ENCODE measurements at regions of chr10 and their contacts with region 1.

Region 1: DNA sequence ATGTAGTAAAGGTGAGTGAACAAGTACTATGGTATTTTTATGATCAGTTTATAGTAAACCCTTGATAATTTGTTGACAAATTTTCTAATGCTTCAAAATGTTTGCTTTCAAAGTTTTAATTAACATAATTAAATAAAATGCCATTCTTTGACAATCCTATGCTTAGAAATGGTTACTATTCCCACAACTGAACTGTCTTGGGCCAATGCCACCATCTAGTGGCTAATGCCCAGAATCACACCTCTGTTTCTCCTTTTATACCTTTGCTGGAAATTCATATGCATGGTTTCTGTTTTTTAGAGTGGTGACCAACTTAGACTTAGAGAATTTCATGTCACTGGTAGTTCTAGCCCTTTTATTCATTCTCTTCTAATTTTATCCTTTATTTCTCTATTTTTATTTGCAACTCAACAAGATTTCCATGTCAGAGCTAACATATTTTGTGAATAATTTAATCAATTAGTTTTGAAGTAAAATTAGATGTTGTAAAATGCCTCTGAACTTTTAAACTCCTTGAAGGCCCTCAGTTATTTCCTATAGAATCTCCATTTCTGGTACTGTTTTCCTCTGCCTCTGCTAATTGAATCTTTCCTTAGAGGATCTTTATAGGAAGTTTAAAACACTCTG is 31.1 kb downstream of the PCGF5 start:
- DNase-seq: no peak
- H3K4me3 ChIP-seq: no peak overlapping the region
- H3K27ac ChIP-seq: no peak overlapping the region
- H3K4me1 ChIP-seq: peaks cover 0 to 4% (median 0%) of the 10 kb centered on the region in 4 experiments; a peak in 2 of 7 replicates
- H3K27me3 ChIP-seq: no peaks in the 10 kb centered on the region
- CTCF ChIP-seq: peak in 2 of 3 experiments; percentile 76 to 81; a peak in 3 of 4 replicates
- EP300 ChIP-seq: no peak
- POLR2A ChIP-seq: no peak
- RAD21 ChIP-seq: peak; percentile 95 to 96

Region 2: DNA sequence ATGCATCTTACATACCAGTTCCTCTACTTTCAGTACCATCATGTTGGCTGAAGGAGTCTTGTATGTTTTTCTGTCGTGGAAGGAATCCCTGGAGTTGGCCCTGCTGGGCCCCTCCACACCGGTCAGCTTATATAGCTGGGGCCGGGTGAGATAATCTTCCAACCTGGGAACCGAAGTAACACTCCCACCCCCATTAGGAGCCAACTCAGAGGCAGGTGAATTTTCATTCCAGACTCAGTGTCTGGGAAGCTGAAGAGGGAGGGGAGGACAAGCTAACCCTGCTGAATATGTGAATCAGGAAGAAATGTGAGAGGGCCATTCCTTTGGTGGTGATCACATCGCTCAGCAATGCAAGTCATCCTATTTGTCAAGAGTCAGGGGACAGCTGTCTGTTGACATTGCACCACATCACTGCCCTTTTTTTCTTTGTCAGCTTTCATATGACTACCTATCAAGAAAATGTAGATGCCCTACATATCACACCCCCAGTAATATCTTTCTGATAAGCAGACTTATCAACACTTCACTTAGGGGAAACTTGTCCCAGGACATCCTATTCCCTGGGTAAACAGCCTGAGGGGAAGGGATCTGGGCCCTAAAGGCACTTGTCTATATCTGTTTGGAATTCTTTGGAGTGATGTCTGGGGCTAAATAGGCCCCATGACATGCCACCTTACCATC is 330.4 kb before region 1 on chr10 and contains the start of gene ANKRD1:
- CTCF ChIA-PET with region 1: interaction called, 13 read pairs
- POLR2A ChIA-PET with region 1: interaction called, 4 read pairs
- DNase-seq: peak in 1 of 2 experiments; percentile 67
- H3K4me3 ChIP-seq: no peak within 1 kb of the TSS
- H3K27ac ChIP-seq: no peak within 1 kb of the TSS
- H3K4me1 ChIP-seq: peaks cover 0 to 3% (median 2%) of the 10 kb centered on the region in 4 experiments; a peak in 3 of 7 replicates
- H3K27me3 ChIP-seq: peaks cover 88 to 98% (median 97%) of the 10 kb centered on the region in 4 experiments
- CTCF ChIP-seq: no peak
- EP300 ChIP-seq: no peak
- POLR2A ChIP-seq: no peak
- RAD21 ChIP-seq: no peak
- total RNA-seq, gene ANKRD1: not detected in 2 replicates

Region 3: DNA sequence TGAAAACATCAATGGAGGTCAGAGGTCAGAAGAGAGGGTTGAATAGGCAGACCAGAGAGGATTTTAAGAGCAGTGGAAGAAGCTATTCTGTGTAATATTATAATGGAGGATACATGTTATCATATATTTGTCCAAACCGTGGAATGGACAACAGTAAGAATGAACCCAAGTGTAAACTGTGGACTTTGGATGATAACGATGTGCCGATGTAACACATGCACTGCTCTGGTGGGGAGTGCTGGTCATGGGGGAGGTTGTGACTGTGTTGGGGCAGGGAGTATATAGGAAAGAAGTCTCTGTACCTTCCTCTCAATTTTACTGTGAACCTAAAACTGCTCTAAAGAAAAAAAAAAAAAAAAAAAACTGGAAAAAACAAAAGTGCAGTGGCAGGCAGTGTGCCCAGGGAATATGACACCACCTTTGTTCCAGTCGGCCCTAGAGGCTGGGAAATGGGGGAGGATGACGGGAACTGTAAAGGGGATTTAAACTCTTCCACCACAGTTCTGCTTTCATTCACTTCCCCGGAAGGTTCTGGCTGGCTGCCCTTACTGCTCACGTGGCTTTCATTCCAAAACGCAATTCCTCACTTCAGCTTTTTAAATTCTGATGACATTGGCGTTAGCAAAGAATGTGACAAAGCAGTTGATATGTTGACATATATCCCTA is 216.9 kb before region 1 on chr10:
- CTCF ChIA-PET with region 1: interaction called, 16 read pairs
- POLR2A ChIA-PET with region 1: no interaction called
- DNase-seq: no peak
- H3K4me3 ChIP-seq: no peak overlapping the region
- H3K27ac ChIP-seq: no peak overlapping the region
- H3K4me1 ChIP-seq: peaks cover 0 to 9% (median 4%) of the 10 kb centered on the region in 4 experiments; a peak in 4 of 7 replicates
- H3K27me3 ChIP-seq: no peaks in the 10 kb centered on the region
- CTCF ChIP-seq: no peak
- EP300 ChIP-seq: no peak
- POLR2A ChIP-seq: no peak
- RAD21 ChIP-seq: no peak

Region 4: DNA sequence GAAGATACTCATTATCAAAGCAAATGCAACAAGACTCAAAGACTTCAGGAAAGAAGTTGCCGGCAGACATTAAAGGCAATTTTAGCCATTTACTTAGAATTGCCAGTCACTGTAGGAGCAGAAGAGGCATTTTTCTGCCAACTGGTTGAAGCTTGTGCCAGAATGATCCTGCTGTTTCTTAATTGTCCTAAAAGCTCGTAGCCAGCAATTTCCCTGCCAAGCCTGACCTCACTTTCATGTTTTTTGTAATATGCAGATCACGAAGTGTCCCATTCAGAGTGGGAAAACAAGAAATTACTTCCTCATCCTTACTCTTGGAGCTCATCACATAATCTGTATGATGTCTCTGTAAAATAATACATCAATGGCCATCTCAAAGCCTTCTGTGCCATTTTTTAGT is 199.7 kb before region 1 on chr10:
- CTCF ChIA-PET with region 1: interaction called, 82 read pairs
- POLR2A ChIA-PET with region 1: no interaction called
- DNase-seq: no peak
- H3K4me3 ChIP-seq: no peak overlapping the region
- H3K27ac ChIP-seq: no peak overlapping the region
- H3K4me1 ChIP-seq: peaks cover 0 to 3% (median 2%) of the 10 kb centered on the region in 4 experiments; a peak in 3 of 7 replicates
- H3K27me3 ChIP-seq: no peaks in the 10 kb centered on the region
- CTCF ChIP-seq: no peak
- EP300 ChIP-seq: no peak
- POLR2A ChIP-seq: no peak
- RAD21 ChIP-seq: no peak

Region 5: GRCh38 chr10:91198781-91199180 is 52.8 kb before region 1 on chr10:
- CTCF ChIA-PET with region 1: no interaction called
- POLR2A ChIA-PET with region 1: no interaction called
- DNase-seq: no peak
- H3K4me3 ChIP-seq: no peak overlapping the region
- H3K27ac ChIP-seq: no peak overlapping the region
- H3K4me1 ChIP-seq: no peaks in the 10 kb centered on the region
- H3K27me3 ChIP-seq: no peaks in the 10 kb centered on the region
- CTCF ChIP-seq: no peak
- EP300 ChIP-seq: no peak
- POLR2A ChIP-seq: no peak
- RAD21 ChIP-seq: no peak

Region 6: DNA sequence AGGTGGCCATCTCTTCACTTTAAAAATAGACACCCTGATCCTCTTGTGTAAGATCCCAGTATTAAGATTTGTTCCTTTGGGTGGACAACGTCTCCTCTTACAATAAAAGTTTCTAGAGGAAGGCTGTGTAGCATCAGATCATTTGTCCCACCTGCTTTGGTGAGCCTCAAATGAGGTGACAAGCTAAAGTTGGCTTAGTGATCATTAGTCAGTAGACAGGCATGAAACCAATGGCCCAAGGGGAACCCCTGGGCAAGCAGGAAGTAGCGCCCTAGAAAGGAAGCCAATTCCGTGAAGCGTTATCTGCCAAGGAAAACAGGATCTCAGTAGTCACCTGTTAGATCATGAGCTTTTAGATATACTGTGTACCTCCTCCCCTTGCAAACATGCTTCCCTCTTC is 35.7 kb after region 1 on chr10:
- CTCF ChIA-PET with region 1: interaction called, 10 read pairs
- POLR2A ChIA-PET with region 1: no interaction called
- DNase-seq: no peak
- H3K4me3 ChIP-seq: no peak overlapping the region
- H3K27ac ChIP-seq: no peak overlapping the region
- H3K4me1 ChIP-seq: peaks cover 0 to 8% (median 3%) of the 10 kb centered on the region in 4 experiments; a peak in 4 of 7 replicates
- H3K27me3 ChIP-seq: peaks cover 0 to 6% (median 0%) of the 10 kb centered on the region in 4 experiments; a peak in 2 of 7 replicates
- CTCF ChIP-seq: no peak
- EP300 ChIP-seq: no peak
- POLR2A ChIP-seq: no peak
- RAD21 ChIP-seq: no peak

Region 7: DNA sequence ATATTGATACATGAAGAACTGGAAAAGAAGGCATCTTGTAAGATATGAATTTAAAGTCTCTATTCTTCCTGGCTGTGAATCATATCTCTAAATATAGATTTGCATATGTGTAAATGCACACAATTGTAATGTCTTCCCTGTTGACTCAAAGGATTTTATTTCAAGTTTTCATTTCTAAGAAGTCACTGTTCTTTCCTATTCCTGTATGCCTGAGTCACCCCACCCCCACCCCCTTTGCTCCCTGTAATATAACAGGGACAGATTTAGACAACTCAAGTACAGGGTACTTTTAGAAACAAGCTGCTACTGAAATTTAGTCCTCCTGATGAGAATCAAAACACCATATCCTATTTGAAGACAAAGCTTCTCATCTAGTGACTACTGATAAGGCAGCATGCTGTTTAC is 115.6 kb after region 1 on chr10:
- CTCF ChIA-PET with region 1: no interaction called
- POLR2A ChIA-PET with region 1: no interaction called
- DNase-seq: no peak
- H3K4me3 ChIP-seq: no peak overlapping the region
- H3K27ac ChIP-seq: no peak overlapping the region
- H3K4me1 ChIP-seq: no peaks in the 10 kb centered on the region
- H3K27me3 ChIP-seq: no peaks in the 10 kb centered on the region
- CTCF ChIP-seq: no peak
- EP300 ChIP-seq: no peak
- POLR2A ChIP-seq: no peak
- RAD21 ChIP-seq: no peak

Measured in H1 (cell line).